Dorsolateral prefrontal cortex (tissue), 120 donors: ENCODE measurements at regions of chr19 and their contacts with region 1.

Region 1: GRCh38 chr19:55467236-55468053 is 2.9 kb upstream of the C19orf85 start:
- DNase-seq: peak in 3 of 10 donors; percentile 59 to 80 (median 62)
- H3K4me3 ChIP-seq: peak overlapping the region in 1 of 59 donors; percentile 13
- H3K27ac ChIP-seq: peak overlapping the region in 9 of 59 donors; percentile 1 to 76 (median 32)
- H3K27me3 ChIP-seq: no peaks in the 10 kb centered on the region
- CTCF ChIP-seq: peak; percentile 87 to 99 (median 97)

Region 2: GRCh38 chr19:55503502-55504251 is 36.2 kb after region 1 on chr19:
- intact Hi-C with region 1: loop called (anchors 2 to 5 kb)
- DNase-seq: peak; percentile 91 to 97 (median 95)
- H3K4me3 ChIP-seq: peak overlapping the region; percentile 35 to 88 (median 61)
- H3K27ac ChIP-seq: peak overlapping the region in 50 of 59 donors; percentile 17 to 91 (median 80)
- H3K27me3 ChIP-seq: no peaks in the 10 kb centered on the region
- CTCF ChIP-seq: peak; percentile 95 to 100 (median 99)